Right cardiac atrium (tissue), 5 donors: ENCODE measurements at regions of chr16 and their contacts with region 1.

Region 1: DNA sequence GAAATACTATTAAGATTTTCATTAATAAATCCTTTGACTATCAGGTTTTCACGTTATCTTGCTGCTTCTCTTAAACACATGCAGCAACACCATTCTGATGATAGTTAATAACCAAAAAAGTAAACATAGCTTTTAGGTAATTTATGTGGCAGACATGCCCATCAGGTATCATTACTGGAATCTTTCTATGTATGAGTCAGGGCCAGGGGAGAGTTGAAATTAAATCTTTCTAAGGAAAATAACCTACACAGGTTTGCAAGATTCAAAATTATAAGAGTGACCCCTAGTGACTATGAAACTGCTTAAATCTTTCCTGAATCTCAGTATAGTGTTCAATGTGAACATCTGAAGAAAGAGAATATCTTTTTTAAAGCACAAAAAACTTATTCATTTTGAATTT is 666.6 kb downstream of the CDH11 start:
- DNase-seq: no peak
- ATAC-seq: no peak
- H3K4me3 ChIP-seq: no peak overlapping the region
- H3K27ac ChIP-seq: no peak overlapping the region
- H3K4me1 ChIP-seq: no peaks in the 10 kb centered on the region
- H3K27me3 ChIP-seq: no peaks in the 10 kb centered on the region

Region 2: DNA sequence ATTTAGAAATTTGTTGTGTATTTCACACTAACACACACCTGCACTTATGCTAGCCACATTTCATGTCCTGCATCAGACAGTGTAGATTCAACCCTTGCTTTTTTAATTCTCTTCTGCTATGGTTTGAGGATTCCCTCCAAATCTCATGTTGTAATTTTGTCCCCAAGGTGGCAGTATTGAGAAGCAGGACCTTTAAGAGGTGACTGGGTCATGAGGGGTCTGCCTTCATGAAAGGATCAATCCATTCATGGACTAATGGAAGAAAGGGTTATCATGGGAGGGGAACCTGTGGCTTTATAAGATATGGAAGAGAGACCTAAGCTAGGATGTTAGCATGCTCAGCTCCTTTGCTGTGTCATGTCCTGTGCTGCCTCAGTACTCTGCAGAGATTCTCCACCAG is 365.6 kb before region 1 on chr16:
- intact Hi-C with region 1: loop called in 1 of 4 experiments (anchors 10 kb)
- DNase-seq: no peak
- ATAC-seq: peak; percentile 16 to 47
- H3K4me3 ChIP-seq: no peak overlapping the region
- H3K27ac ChIP-seq: no peak overlapping the region
- H3K4me1 ChIP-seq: no peaks in the 10 kb centered on the region
- H3K27me3 ChIP-seq: no peaks in the 10 kb centered on the region

Region 3: DNA sequence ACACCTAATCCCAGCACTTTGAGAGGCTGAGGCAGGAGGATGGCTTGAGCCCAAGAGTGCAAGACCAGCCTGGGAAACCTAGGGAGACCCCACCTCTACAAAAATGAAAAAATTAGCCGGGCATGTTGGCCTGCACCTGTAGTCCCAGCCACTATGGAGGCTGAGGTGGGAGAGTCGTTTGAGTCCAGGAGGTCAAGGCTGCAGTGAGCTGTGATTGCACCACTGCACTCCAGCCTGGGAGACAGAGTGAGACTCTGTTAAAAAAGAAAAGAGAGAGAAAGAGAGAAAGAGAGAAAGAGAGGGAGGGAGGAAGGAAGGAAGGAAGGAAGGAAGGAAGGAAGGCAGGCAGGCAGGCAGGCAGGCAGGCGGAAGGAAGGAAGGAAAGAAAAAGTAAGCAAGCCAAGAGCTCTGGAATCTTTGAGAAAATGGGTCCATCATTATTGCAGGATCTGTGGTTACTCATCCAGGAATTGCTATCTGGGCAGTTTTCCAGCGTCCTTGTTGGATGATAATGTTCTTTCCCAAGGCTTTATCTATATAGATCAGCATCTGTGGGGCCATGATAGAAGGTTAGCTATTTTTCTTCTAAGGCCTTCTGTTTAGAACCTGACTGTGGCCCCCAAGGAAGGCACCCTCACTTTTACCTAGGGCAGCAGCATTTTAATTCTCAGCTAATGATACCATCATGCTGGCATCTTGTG is 1378.1 kb after region 1 on chr16:
- intact Hi-C with region 1: no loop called
- DNase-seq: no peak
- ATAC-seq: no peak
- H3K4me3 ChIP-seq: no peak overlapping the region
- H3K27ac ChIP-seq: no peak overlapping the region
- H3K4me1 ChIP-seq: no peaks in the 10 kb centered on the region
- H3K27me3 ChIP-seq: no peaks in the 10 kb centered on the region